ENCODE measurements at regions of chr5 and their contacts with region 1.

Region 1: DNA sequence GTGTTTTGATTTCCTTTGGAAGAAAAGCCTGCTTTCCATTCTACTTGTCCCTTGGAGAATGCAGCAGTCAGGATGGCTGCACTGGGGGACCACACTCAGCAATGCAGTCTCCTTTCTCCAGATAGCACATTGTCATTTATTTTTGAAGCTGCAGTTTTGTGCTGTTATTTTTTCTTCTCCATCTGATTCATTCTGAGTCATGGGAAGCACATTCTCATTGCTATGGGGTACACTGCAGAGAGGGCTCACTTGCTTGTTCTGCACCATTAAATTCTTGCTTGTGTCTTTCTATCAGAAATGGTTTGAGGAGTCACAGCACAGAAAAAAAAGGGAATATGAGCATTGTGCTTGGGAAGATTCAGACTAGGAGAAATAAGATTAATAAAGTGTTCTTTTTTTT is 39.7 kb upstream of the POC5 start:
- DNase-seq: no peak

Region 2: GRCh38 chr5:75744355-75744754 is 12.6 kb before region 1 on chr5:
- intact Hi-C with region 1: loop called in 1 of 2 experiments (anchors 1 kb)
- DNase-seq: no peak

Measured in posterior vena cava (tissue), 2 donors.